WTC11 (cell line): ENCODE measurements at regions of chr17 and their contacts with region 1.

Region 1: DNA sequence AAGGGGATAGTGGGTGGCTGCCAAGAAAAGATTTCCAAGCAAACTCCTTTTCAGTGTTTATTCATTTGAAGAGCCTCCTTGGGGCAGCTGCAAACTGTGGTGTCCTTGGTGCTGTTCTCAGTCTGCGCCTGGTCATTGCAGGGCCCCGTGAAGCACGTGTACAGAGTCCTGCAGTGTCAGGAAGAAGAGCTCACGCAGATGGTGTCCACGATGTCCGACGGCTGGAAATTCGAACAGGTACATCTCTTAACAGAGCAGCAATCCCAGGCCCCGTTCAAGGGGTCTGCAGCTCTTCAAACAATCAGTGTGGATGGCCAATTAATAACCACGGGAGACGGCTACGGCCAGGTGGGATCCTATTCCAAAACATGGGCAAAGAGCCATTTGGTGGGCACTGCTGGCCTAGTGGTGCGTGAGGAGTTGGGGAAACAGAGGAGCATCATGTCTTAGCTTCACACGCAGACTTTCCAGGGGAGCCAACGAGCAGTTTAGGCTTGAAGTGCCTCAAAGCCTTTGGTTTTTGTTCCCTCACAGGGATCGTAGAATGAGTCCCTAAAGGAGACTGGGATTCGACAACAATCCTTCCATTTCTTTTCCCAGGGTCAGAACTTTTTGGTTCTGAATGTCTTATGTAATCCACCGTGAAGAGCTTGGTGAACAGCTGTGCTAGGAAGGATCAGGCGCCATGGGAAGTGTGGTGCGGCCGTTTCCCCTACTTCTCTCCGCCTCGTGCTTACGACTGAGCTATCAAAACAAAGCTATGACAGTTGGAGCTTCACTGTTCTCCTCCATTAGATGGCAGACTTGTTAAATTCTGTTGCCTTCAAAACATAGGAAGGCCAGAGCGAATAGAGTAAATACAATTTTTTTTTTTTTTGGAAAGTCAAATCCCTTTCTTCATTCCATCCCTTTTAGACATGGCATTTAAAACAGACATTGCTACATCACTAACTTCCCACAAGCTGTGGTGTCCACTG is 12.6 kb downstream of the KCTD2 start:
- DNase-seq: no peak
- ATAC-seq: peak; percentile 55
- H3K4me3 Mint-ChIP-seq: no peak overlapping the region
- H3K27ac Mint-ChIP-seq: peak overlapping the region; percentile 15; the same call in 1 of the 2 replicates
- H3K4me1 Mint-ChIP-seq: no peaks in the 10 kb centered on the region
- H3K27me3 Mint-ChIP-seq: no peaks in the 10 kb centered on the region
- CTCF ChIP-seq: no peak

Region 2: DNA sequence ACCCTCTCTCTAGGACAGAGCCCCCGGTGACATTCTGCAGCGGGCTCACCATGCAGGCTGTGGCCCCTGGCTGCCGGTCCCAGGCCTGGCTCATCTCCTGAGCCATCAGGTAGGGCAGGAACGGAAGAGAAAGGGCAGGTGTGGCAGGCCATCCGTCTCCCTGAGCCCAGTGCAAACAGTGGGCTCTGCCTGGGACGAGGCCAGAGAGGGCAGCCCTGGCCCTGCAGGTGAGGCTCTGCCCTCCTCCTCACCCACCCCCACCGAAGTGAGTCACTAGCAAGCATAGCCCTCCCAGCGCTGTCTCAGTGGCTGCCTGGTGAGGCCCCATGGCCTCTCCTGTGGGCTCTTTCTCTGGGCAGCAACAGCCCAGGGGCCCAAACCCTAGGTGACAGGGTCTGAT is 109.5 kb before region 1 on chr17:
- CTCF ChIA-PET with region 1: no interaction called
- POLR2A ChIA-PET with region 1: no interaction called
- DNase-seq: no peak
- ATAC-seq: no peak
- H3K4me3 Mint-ChIP-seq: no peak overlapping the region
- H3K27ac Mint-ChIP-seq: no peak overlapping the region
- H3K4me1 Mint-ChIP-seq: peaks cover 13% of the 10 kb centered on the region
- H3K27me3 Mint-ChIP-seq: peaks cover 9% of the 10 kb centered on the region
- CTCF ChIP-seq: no peak

Region 3: GRCh38 chr17:75024686-75025397 is 34.8 kb before region 1 on chr17:
- CTCF ChIA-PET with region 1: no interaction called
- POLR2A ChIA-PET with region 1: no interaction called
- DNase-seq: no peak
- ATAC-seq: no peak
- H3K4me3 Mint-ChIP-seq: no peak overlapping the region
- H3K27ac Mint-ChIP-seq: no peak overlapping the region
- H3K4me1 Mint-ChIP-seq: no peaks in the 10 kb centered on the region
- H3K27me3 Mint-ChIP-seq: peaks cover 9% of the 10 kb centered on the region
- CTCF ChIP-seq: no peak

Region 4: GRCh38 chr17:75069783-75070182 is 10.1 kb after region 1 on chr17:
- CTCF ChIA-PET with region 1: interaction called, 18 read pairs
- POLR2A ChIA-PET with region 1: no interaction called
- DNase-seq: no peak
- ATAC-seq: no peak
- H3K4me3 Mint-ChIP-seq: no peak overlapping the region
- H3K27ac Mint-ChIP-seq: 0 out of 2 replicates have a peak overlapping the region, but pooled peaks have one; percentile 49
- H3K4me1 Mint-ChIP-seq: no peaks in the 10 kb centered on the region
- H3K27me3 Mint-ChIP-seq: no peaks in the 10 kb centered on the region
- CTCF ChIP-seq: no peak

Region 5: GRCh38 chr17:75077496-75078283 is 18.0 kb after region 1 on chr17:
- CTCF ChIA-PET with region 1: interaction called, 16 read pairs
- POLR2A ChIA-PET with region 1: no interaction called
- DNase-seq: peak; percentile 51
- ATAC-seq: peak; percentile 51
- H3K4me3 Mint-ChIP-seq: peak overlapping the region; percentile 54
- H3K27ac Mint-ChIP-seq: no peak overlapping the region
- H3K4me1 Mint-ChIP-seq: peaks cover 28% of the 10 kb centered on the region
- H3K27me3 Mint-ChIP-seq: peaks cover 12% of the 10 kb centered on the region
- CTCF ChIP-seq: no peak

Region 6: GRCh38 chr17:75131280-75132017 is 71.8 kb after region 1 on chr17 and contains the start of gene NT5C:
- CTCF ChIA-PET with region 1: interaction called, 12 read pairs
- POLR2A ChIA-PET with region 1: interaction called, 3 read pairs
- DNase-seq: peak; percentile 87
- ATAC-seq: peak; percentile 75
- H3K4me3 Mint-ChIP-seq: peak within 1 kb of the TSS; percentile 84
- H3K27ac Mint-ChIP-seq: peak within 1 kb of the TSS; percentile 93
- H3K4me1 Mint-ChIP-seq: peaks cover 20% of the 10 kb centered on the region
- H3K27me3 Mint-ChIP-seq: no peaks in the 10 kb centered on the region
- CTCF ChIP-seq: peak; percentile 59
- total RNA-seq, gene NT5C: 91.0 to 102 TPM (median 96.9 TPM) in 3 replicates